ENCODE measurements at regions of chr22 and their contacts with region 1.

Region 1: DNA sequence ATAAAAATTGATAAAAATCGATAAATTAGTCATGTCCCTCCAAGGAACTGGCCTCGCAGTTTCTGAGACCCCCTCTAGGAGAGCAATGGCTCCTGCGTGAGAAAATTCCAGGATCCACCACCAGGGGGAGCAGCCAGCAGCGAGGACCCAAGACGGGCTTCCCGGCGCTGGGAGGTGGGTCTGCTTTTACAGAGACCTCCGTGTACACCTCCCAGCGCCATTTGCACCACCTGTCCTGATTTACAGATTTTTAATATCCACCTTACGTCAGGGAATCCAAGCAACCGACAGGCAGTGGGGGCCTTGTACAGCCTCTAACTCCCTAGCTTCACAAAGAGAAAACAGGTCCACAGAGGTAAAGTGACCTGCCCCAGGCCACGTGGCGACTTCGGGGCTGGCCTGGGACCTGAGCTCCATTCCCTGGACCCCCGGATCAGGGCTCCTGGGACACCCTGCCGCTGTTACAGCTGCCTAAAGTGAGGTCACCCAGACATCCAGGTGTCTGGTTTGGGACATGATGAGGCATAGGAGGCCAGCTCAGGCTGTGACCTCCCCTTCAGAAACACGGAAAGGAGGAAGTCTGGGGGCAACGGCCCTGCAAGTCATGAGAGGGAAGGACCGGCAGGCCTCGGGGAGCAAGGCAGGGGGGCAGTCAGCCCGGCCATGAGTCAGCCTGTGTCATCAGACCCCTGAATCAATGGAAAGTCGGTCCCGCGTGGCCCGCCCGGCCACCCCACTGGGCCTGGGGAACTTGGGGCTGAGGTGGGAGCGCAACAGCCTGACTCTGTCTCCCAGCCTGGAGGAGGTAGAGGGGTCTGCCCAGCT is 3.5 kb downstream of the OSM start:
- DNase-seq: peak; percentile 57 to 88 (median 82)
- ATAC-seq: no peak
- H3K4me3 ChIP-seq: peak overlapping the region; percentile 7 to 13
- H3K4me3 Mint-ChIP-seq: peak overlapping the region; percentile 43
- H3K27ac ChIP-seq: no peak overlapping the region
- H3K27ac Mint-ChIP-seq: no peak overlapping the region
- H3K4me1 ChIP-seq: peaks cover 32% of the 10 kb centered on the region
- H3K4me1 Mint-ChIP-seq: peaks cover 37% of the 10 kb centered on the region
- H3K27me3 ChIP-seq: no peaks in the 10 kb centered on the region
- H3K27me3 Mint-ChIP-seq: no peaks in the 10 kb centered on the region
- CTCF ChIP-seq: peak; percentile 100

Region 2: DNA sequence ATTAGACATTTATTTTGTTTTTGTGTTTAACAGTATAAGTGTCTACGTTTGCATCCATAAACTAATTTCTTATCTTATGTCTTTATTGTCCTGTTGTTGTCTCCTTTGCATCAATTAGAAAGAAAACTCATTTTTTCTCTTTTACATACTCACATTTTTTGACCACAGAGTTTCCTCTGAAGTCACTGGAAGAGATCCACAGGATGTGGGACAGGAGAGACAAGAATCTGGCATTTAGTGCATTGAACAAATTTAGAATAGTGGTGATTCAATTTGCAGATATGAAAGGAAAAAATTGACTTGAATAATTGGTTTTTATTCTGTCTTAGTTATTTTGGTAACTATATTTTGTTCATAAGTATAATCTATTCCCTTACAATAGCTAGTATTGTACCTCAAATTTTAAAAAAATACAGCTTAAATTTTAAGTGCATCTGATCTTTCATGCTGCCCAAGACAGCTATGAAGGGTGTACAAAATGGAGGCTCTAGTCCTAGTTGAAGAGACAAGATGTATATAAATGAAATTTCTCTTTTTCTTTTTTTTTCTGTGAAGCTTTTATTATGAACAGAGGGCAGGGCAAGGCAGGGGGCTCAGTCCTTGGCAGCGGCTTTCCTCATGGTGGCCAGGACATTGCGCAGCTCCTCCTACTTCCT is 158.5 kb before region 1 on chr22:
- CTCF ChIA-PET with region 1: interaction called, 19 read pairs
- POLR2A ChIA-PET with region 1: no interaction called
- intact Hi-C with region 1: loop called (anchors 1 to 2 kb)
- DNase-seq: peak in 1 of 9 experiments; percentile 16
- ATAC-seq: no peak
- H3K4me3 ChIP-seq: no peak overlapping the region
- H3K4me3 Mint-ChIP-seq: no peak overlapping the region
- H3K27ac ChIP-seq: no peak overlapping the region
- H3K27ac Mint-ChIP-seq: no peak overlapping the region
- H3K4me1 ChIP-seq: peaks cover 14% of the 10 kb centered on the region
- H3K4me1 Mint-ChIP-seq: peaks cover 20% of the 10 kb centered on the region
- H3K27me3 ChIP-seq: no peaks in the 10 kb centered on the region
- H3K27me3 Mint-ChIP-seq: no peaks in the 10 kb centered on the region
- CTCF ChIP-seq: no peak

Region 3: DNA sequence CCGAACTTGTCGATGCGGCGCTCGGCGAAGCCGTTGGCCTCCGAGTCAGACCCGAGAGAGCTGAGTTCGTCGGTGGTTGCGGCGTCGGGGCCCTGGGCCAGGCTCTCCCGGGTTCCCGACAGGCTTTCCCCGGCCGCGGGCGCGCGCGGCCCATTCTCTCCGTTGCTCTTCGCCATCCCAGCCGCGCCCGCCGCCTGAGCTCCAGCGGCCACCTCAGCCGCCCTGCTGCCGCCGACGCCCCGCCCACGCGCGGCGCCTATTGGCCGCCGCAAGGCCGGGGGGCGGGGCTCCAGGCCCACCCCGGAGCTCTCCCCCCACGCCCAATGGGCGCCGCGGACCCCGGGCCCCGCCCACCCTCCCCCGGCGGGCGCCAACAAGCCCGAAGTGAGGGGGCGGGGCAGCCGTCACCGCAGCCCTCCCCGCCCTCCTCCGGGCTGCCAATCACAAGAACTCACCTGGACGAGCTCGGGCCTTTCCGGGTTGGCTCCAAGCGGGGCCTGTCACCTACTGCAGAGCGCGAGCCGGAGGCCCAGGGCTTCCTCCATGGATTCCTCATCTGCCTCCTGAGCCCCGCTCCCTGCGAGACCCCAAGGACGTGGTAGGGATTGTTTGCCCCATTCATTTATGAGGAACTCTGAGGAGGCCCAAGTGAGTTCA is 63.7 kb after region 1 on chr22 and contains the start of gene TBC1D10A:
- CTCF ChIA-PET with region 1: interaction called, 12 read pairs
- POLR2A ChIA-PET with region 1: no interaction called
- intact Hi-C with region 1: loop called in 1 of 2 experiments (anchors 1 kb)
- DNase-seq: peak; percentile 86 to 97 (median 94)
- ATAC-seq: peak; percentile 92
- H3K4me3 ChIP-seq: peak within 1 kb of the TSS; percentile 52 to 72
- H3K4me3 Mint-ChIP-seq: peak within 1 kb of the TSS; percentile 93
- H3K27ac ChIP-seq: peak within 1 kb of the TSS; percentile 68 to 86
- H3K27ac Mint-ChIP-seq: peak within 1 kb of the TSS; percentile 91
- H3K4me1 ChIP-seq: peaks cover 47% of the 10 kb centered on the region
- H3K4me1 Mint-ChIP-seq: peaks cover 45% of the 10 kb centered on the region
- H3K27me3 ChIP-seq: no peaks in the 10 kb centered on the region
- H3K27me3 Mint-ChIP-seq: no peaks in the 10 kb centered on the region
- CTCF ChIP-seq: no peak
- total RNA-seq, gene TBC1D10A: 77.5 to 87.3 TPM

Region 4: GRCh38 chr22:30356449-30357235 is 93.5 kb after region 1 on chr22 and contains the starts of genes CCDC157 and SF3A1:
- CTCF ChIA-PET with region 1: interaction called, 4 read pairs
- POLR2A ChIA-PET with region 1: no interaction called
- intact Hi-C with region 1: loop called in 1 of 2 experiments (anchors 1 kb)
- DNase-seq: peak; percentile 74 to 96 (median 87)
- ATAC-seq: peak; percentile 83
- H3K4me3 ChIP-seq: peak within 1 kb of the TSS; percentile 73 to 94
- H3K4me3 Mint-ChIP-seq: peak within 1 kb of the TSS; percentile 92
- H3K27ac ChIP-seq: peak within 1 kb of the TSS; percentile 93 to 99
- H3K27ac Mint-ChIP-seq: peak within 1 kb of the TSS; percentile 93
- H3K4me1 ChIP-seq: peaks cover 44% of the 10 kb centered on the region
- H3K4me1 Mint-ChIP-seq: peaks cover 48% of the 10 kb centered on the region
- H3K27me3 ChIP-seq: no peaks in the 10 kb centered on the region
- H3K27me3 Mint-ChIP-seq: no peaks in the 10 kb centered on the region
- CTCF ChIP-seq: no peak
- total RNA-seq, gene CCDC157: 8.7 to 11.7 TPM
- total RNA-seq, gene SF3A1: 406 to 422 TPM

Region 5: DNA sequence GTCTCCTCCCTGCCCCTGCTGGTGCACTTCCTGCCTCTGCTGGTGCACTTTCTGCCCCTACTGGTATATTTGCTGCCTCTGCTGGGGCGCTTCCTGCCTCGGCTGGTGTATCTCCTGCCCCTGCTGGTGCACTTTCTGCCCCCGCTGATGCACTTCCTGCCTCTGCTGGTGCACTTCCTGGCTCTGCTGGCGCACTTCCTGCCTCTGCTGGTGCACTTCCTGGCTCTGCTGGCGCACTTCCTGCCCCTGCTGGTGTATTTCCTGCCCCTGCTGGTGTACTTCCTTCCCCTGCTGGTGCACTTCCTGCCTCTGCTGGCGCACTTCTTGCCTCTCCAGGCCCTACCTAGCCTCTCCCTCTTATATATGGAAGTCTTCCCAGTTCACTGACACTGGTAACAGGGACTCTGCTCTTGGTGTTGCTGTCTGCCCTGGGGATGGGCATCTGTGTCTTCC is 172.6 kb after region 1 on chr22:
- CTCF ChIA-PET with region 1: no interaction called
- POLR2A ChIA-PET with region 1: no interaction called
- intact Hi-C with region 1: loop called in 1 of 2 experiments (anchors 2 kb)
- DNase-seq: peak; percentile 68 to 99 (median 89)
- ATAC-seq: peak; percentile 92
- H3K4me3 ChIP-seq: peak overlapping the region; percentile 39 to 51
- H3K4me3 Mint-ChIP-seq: peak overlapping the region; percentile 65
- H3K27ac ChIP-seq: peak overlapping the region; percentile 80 to 100
- H3K27ac Mint-ChIP-seq: peak overlapping the region; percentile 97
- H3K4me1 ChIP-seq: peaks cover 17% of the 10 kb centered on the region
- H3K4me1 Mint-ChIP-seq: peaks cover 26% of the 10 kb centered on the region
- H3K27me3 ChIP-seq: peaks cover 0 to 6% of the 10 kb centered on the region in 2 experiments
- H3K27me3 Mint-ChIP-seq: peaks cover 22% of the 10 kb centered on the region
- CTCF ChIP-seq: peak; percentile 70

Region 6: DNA sequence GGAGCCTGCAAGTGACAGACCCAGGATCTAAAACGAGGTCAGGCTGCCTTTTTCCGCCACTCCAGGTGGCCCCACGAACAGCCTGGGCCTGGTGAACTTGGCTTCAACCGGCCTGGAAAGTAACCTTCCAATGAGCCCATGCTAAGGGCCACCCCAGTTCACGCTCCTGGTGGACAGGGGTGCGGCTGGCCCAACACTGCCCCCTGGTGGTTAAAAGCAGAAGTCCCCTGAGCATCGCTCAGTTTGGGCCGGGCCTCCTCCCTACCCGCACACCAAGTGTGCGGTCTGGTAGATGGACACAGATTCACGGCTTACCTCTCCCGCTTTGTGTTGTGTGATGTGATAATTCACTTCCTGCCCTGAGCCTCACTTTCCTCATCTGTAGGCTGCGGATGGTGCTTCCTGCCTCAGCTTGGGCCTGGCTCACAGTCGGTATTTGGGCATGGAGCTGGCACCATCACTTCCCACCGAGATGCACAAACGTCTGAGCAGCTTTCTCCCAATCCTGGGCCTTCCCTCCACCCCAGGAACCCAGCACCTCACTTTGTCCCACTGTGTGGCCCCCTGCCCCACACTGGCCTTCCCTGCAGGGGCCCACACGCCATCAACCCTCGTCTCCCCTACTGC is 222.3 kb after region 1 on chr22:
- CTCF ChIA-PET with region 1: interaction called, 5 read pairs
- POLR2A ChIA-PET with region 1: no interaction called
- intact Hi-C with region 1: loop called in 1 of 2 experiments (anchors 5 kb)
- DNase-seq: peak; percentile 60 to 85 (median 75)
- ATAC-seq: peak; percentile 98
- H3K4me3 ChIP-seq: no peak overlapping the region
- H3K4me3 Mint-ChIP-seq: no peak overlapping the region
- H3K27ac ChIP-seq: no peak overlapping the region
- H3K27ac Mint-ChIP-seq: no peak overlapping the region
- H3K4me1 ChIP-seq: no peaks in the 10 kb centered on the region
- H3K4me1 Mint-ChIP-seq: no peaks in the 10 kb centered on the region
- H3K27me3 ChIP-seq: no peaks in the 10 kb centered on the region
- H3K27me3 Mint-ChIP-seq: peaks cover 2% of the 10 kb centered on the region
- CTCF ChIP-seq: peak; percentile 95

Region 7: DNA sequence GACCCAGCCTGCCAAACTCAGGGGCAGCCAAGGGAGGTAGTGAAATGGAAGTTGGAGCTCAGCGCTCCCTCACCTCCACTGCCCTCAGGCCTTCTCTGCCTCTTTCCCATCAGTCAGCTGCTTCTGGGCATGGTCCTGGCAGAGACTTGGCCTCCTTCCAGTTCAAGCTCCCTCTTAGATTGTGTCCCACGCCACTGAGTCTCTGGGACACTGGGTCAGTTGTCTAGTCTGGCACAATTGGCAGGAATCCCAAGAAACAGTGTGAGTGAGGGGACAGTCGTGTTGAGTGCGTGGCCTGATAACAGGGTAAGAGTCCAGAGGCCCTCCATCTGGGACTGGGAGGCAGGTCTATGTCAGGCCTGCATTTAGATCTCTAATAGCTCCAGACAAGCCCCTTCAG is 365.4 kb after region 1 on chr22:
- CTCF ChIA-PET with region 1: no interaction called
- POLR2A ChIA-PET with region 1: no interaction called
- intact Hi-C with region 1: no loop called
- DNase-seq: no peak
- ATAC-seq: no peak
- H3K4me3 ChIP-seq: no peak overlapping the region
- H3K4me3 Mint-ChIP-seq: no peak overlapping the region
- H3K27ac ChIP-seq: no peak overlapping the region
- H3K27ac Mint-ChIP-seq: no peak overlapping the region
- H3K4me1 ChIP-seq: no peaks in the 10 kb centered on the region
- H3K4me1 Mint-ChIP-seq: no peaks in the 10 kb centered on the region
- H3K27me3 ChIP-seq: no peaks in the 10 kb centered on the region
- H3K27me3 Mint-ChIP-seq: no peaks in the 10 kb centered on the region
- CTCF ChIP-seq: no peak